Dorsolateral prefrontal cortex (tissue), 120 donors: ENCODE measurements at regions of chr1 and their contacts with region 1.

Region 1: GRCh38 chr1:28172713-28173150 is 3.8 kb downstream of the PTAFR start:
- DNase-seq: no peak
- H3K4me3 ChIP-seq: peak overlapping the region in 4 of 59 donors; percentile 2 to 10 (median 6)
- H3K27ac ChIP-seq: peak overlapping the region in 56 of 59 donors; percentile 22 to 89 (median 78)
- H3K27me3 ChIP-seq: no peaks in the 10 kb centered on the region
- CTCF ChIP-seq: no peak

Region 2: GRCh38 chr1:28104866-28105467 is 67.8 kb before region 1 on chr1:
- intact Hi-C with region 1: loop called (anchors 5 kb)
- DNase-seq: peak; percentile 13 to 86 (median 75)
- H3K4me3 ChIP-seq: peak overlapping the region in 56 of 59 donors; percentile 1 to 61 (median 42)
- H3K27ac ChIP-seq: peak overlapping the region; percentile 80 to 99 (median 94)
- H3K27me3 ChIP-seq: no peaks in the 10 kb centered on the region
- CTCF ChIP-seq: peak in 1 of 56 donors; percentile 8

Region 3: DNA sequence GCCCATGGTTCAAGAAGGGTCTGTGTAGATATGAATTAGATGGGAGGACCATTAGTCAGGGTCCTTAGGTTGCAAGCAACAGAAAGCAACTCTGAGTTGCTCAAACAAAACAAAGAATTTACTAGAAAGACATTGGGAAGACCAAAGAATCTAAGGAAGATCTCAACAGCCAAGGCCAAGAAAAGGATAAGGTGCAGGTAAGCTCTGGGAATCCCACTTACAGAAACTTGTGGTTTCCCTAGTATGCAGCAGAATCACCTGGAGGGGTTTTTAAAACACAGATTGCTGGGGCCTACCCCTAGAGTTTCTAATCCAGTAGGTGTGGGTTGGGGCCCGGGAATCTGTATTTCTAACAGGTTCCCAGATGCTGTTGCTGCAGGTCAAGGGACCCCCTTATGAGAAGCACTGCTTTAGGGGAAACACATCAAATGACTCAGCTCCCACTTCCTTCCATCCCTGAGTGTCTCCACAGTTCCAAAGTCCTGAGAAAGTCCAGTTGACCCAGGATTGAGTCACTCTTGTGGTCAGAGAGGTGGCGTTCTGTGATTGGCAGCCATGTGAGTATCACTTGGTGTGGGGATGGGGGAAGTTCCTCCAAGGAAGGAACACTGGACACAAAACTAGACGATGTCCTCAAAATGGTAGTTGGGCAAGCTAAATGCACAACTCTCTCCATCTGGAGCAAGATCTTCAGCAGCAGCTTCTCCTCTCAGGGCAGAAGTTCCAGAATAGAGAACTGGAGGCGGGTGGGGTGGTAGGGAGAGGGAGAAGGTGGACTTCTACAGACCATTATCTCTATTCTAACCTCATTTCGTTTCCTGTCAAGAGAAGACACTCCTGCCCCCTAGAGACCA is 60.1 kb before region 1 on chr1:
- intact Hi-C with region 1: loop called (anchors 5 kb)
- DNase-seq: peak in 1 of 10 donors; percentile 31
- H3K4me3 ChIP-seq: no peak overlapping the region
- H3K27ac ChIP-seq: peak overlapping the region in 3 of 59 donors; percentile 0 to 10 (median 3)
- H3K27me3 ChIP-seq: no peaks in the 10 kb centered on the region
- CTCF ChIP-seq: peak in 23 of 56 donors; percentile 10 to 58 (median 30)